ENCODE measurements at regions of chr2 and their contacts with region 1.

Region 1: DNA sequence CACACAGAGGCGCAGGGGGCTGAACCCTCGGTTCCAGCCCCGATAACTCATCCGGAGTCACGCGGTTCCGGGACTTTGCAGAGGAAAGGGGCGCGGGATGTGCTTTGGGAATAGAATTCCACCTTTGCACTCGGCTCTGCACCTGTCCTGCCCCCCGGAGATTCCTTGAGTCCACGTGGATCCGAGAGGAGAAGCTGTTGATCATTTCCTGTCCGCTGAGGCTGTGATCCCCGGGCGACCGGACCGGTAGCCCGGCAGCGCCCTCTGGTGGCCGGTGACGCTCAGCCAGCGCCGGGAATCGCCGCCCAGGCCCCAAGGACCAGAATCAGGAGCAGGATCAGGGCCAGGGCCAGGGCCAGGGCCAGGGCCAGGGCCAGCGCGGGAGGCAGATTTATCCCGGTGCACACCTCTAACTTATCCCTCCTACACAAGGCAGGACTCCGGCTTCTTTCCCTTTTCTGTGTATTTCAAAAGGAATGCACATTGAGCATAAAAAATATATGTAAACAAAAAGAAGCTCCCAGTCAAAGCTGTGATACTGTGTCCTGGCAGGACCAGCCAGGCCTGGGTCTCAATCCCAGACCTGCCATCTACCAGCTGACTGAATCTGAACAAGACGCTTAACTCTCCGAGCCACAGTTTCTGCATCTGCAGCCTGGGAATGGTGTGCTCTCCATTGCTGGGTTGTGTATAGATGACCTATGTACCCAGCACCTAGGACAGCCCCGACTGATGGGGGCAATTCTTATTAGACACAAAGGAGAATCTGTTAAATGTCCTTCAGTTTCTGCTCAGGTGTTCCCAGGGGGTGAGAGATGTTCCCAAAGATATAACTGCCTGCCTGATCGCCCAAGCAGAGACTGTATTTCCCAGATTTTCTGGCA is 8.5 kb upstream of the SPATA3 start:
- DNase-seq: peak; percentile 72 to 84
- H3K4me3 ChIP-seq: peak overlapping the region; percentile 24 to 47
- H3K27ac ChIP-seq: no peak overlapping the region
- H3K4me1 ChIP-seq: peaks cover 0 to 5% (median 5%) of the 10 kb centered on the region in 4 donors
- H3K27me3 ChIP-seq: peaks cover 0 to 29% of the 10 kb centered on the region in 2 donors
- CTCF ChIP-seq: peak; percentile 84 to 93

Region 2: GRCh38 chr2:230312638-230313037 is 674.7 kb before region 1 on chr2:
- intact Hi-C with region 1: no loop called
- DNase-seq: no peak
- H3K4me3 ChIP-seq: no peak overlapping the region
- H3K27ac ChIP-seq: no peak overlapping the region
- H3K4me1 ChIP-seq: no peaks in the 10 kb centered on the region
- H3K27me3 ChIP-seq: no peaks in the 10 kb centered on the region
- CTCF ChIP-seq: no peak

Region 3: DNA sequence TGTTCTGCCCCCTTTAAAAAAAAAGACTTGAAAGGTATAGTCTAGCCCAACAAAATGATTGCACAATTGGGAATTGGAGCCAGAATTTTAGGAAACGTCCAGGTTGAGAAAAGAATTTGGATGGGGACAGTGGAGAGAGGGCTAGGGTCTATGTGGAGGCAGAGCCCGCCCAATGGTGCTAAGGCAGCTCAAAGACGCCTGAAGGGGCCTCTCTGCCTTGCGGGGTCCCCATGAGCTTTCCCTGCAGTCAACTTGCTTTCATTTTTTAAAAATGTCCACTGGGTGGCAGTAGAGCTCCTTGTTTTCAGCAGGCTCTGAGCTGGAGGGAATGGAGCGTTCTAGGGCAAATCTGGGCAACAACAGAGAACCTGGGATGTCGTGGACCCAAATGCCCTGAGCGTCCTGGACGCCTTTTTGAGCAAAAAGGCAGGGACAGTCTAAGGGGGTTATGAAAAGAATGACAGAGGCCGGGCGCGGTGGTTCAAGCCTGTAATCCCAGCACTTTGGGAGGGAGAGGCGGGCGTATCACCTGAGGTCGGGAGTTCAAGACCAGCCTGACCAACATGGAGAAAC is 162.9 kb before region 1 on chr2:
- intact Hi-C with region 1: loop called (anchors 2 kb)
- DNase-seq: peak in 1 of 2 donors; percentile 67
- H3K4me3 ChIP-seq: peak overlapping the region in 1 of 2 donors; percentile 40
- H3K27ac ChIP-seq: no peak overlapping the region
- H3K4me1 ChIP-seq: peaks cover 0 to 19% (median 9%) of the 10 kb centered on the region in 4 donors
- H3K27me3 ChIP-seq: peaks cover 0 to 37% of the 10 kb centered on the region in 2 donors
- CTCF ChIP-seq: peak; percentile 68 to 80

Region 4: DNA sequence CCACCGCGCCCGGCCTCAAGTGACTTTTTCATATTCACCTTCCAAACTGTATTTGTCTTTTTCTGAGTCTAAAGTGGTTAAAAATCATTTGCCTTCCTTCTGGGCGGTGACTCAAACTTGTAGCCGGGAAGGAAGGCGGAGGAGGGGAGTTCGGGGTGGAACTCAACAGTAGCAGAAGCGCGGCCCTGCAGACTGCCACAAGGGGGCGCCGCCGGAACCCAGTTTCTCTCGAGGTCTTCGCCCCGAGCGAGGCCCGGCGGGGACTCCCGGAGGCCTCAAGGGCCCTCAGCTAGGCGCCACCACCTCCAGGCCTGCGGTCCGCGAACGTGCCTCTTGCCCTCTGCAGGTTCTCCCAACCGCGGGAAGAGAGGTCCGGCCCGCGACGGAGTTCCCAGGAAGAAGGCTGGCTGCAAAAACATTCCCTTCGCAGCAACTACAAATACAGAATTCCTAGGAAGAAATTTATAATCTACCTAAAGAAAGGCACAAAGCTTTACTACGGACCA is 139.4 kb before region 1 on chr2:
- intact Hi-C with region 1: loop called (anchors 5 kb)
- DNase-seq: peak; percentile 74 to 85
- H3K4me3 ChIP-seq: peak overlapping the region in 1 of 2 donors; percentile 33
- H3K27ac ChIP-seq: no peak overlapping the region
- H3K4me1 ChIP-seq: peaks cover 0 to 8% (median 3%) of the 10 kb centered on the region in 4 donors
- H3K27me3 ChIP-seq: peaks cover 0 to 28% of the 10 kb centered on the region in 2 donors
- CTCF ChIP-seq: peak; percentile 78 to 85

Region 5: GRCh38 chr2:231998046-231998445 is 1010.7 kb after region 1 on chr2:
- intact Hi-C with region 1: no loop called
- DNase-seq: no peak
- H3K4me3 ChIP-seq: no peak overlapping the region
- H3K27ac ChIP-seq: no peak overlapping the region
- H3K4me1 ChIP-seq: peaks cover 0 to 15% (median 3%) of the 10 kb centered on the region in 4 donors
- H3K27me3 ChIP-seq: no peaks in the 10 kb centered on the region
- CTCF ChIP-seq: no peak

Measured in tibial artery (tissue), 4 donors.